ENCODE measurements at regions of chr11 and their contacts with region 1.

Region 1: GRCh38 chr11:61332797-61333549 is at the starts of genes DDB1 and TKFC:
- DNase-seq: peak; percentile 72 to 97
- H3K4me3 ChIP-seq: peak within 1 kb of the TSS; percentile 97 to 98
- H3K27ac ChIP-seq: peak within 1 kb of the TSS; percentile 92 to 93
- H3K4me1 ChIP-seq: peaks cover 0 to 20% of the 10 kb centered on the region in 2 donors
- H3K27me3 ChIP-seq: no peaks in the 10 kb centered on the region
- CTCF ChIP-seq: no peak
- total RNA-seq, gene DDB1: 130 TPM
- total RNA-seq, gene TKFC: 7.3 TPM

Region 2: DNA sequence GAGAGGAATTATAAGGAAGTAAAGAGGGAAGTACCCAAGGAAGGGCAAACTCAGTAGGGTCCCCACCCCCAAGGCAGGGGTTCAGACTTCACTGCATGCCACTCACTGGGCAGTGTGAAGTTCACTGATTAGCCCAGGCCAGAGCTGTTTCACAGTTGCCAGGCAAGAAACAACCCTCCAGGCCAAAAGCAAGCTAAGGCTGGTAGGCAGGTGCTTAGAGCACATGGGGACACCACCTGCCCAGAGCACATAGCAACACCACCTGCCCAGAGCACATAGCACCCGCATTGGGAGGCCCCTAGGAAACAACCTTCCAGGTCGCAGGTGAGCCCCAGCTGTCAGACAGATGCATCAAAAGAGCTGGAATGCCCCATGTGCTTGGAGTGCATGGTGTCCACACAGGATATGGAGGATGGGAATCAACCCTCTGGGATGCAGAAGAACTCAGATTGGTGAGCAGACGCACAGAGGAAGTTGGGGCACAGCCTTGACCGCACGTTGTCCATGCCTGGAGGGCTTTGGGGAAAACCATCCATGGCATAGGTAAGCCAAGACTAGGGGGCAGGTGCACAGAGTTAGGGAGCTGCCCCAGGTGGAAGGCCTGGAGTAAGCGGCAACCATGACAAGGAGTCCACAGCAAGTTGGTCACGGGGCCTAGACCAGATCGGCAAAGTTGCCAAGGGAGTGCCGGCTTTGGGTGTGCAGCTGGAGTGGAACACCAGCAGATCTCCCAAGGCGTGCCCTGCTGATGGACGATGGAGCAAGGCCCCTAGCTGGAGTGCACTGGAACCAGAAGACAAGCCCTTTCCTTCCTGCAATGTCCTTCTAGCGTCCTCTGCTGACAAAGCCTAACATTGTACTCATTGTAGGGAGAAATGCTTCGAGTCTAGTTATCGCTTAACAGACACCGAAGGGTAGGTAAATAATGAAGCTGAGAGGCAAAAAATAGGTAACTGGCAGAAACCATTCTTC is 51.6 kb after region 1 on chr11:
- intact Hi-C with region 1: loop called (anchors 1 kb)
- DNase-seq: no peak
- H3K4me3 ChIP-seq: no peak overlapping the region
- H3K27ac ChIP-seq: no peak overlapping the region
- H3K4me1 ChIP-seq: peaks cover 0 to 5% of the 10 kb centered on the region in 2 donors
- H3K27me3 ChIP-seq: no peaks in the 10 kb centered on the region
- CTCF ChIP-seq: no peak

Region 3: GRCh38 chr11:61429691-61430582 is 97.0 kb after region 1 on chr11 and contains the starts of genes CPSF7 and SDHAF2:
- intact Hi-C with region 1: loop called (anchors 2 kb)
- DNase-seq: peak; percentile 77 to 98
- H3K4me3 ChIP-seq: peak within 1 kb of the TSS; percentile 70 to 77
- H3K27ac ChIP-seq: peak within 1 kb of the TSS; percentile 98 to 99
- H3K4me1 ChIP-seq: peaks cover 0 to 10% of the 10 kb centered on the region in 2 donors
- H3K27me3 ChIP-seq: no peaks in the 10 kb centered on the region
- CTCF ChIP-seq: no peak
- total RNA-seq, gene CPSF7: 22.9 TPM
- total RNA-seq, gene SDHAF2: 13.6 TPM